HepG2 (cell line): ENCODE measurements at regions of chr7 and their contacts with region 1.

Region 1: DNA sequence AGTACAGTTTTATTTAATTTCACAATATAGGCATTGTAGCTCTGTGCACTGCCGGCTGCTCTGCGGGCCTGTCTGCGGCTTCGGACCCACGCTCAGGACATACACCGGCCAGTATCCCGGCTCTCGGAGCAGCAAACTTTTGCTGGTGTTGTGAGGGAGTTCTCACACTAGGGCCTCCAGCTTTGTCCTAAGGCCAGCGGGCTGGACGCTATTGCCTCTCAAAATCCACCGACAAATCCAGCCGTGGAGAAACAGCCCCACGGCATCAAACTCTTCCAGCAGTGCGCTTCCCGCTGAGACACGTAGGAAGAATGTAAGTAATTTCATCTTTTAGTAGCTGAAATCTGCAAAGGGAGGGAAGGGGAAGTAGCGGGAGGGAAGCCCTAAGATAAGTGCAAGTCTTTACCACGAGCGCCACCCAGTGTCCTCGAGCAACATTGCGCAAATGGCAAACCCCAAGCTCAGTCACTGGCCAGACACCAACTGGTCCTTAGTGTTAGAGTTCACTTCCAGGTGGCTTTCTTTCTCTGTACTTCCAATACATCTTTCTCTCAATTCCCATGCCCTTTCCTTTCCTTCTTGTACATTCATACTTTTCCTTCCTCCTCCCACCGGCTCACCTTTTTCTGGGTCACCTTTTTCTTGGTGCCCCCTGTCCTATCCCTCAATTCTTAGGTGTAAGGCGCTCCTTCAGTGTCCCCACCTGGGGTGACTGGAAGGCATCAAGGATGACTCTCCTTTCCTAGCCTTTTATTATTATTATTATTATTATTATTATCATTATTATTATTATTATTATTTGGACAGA is 3.0 kb upstream of the DLX5 start:
- DNase-seq: peak; percentile 70
- ATAC-seq: peak; percentile 86
- H3K4me3 ChIP-seq: peak overlapping the region; percentile 53 to 77 (median 68)
- H3K27ac ChIP-seq: no peak overlapping the region
- H3K4me1 ChIP-seq: peaks cover 24% of the 10 kb centered on the region
- H3K27me3 ChIP-seq: peaks cover 0 to 42% of the 10 kb centered on the region in 2 experiments; a peak in 4 of 5 replicates
- CTCF ChIP-seq: peak; percentile 96
- EP300 ChIP-seq: no peak
- POLR2A ChIP-seq: no peak
- RAD21 ChIP-seq: peak; percentile 93

Region 2: DNA sequence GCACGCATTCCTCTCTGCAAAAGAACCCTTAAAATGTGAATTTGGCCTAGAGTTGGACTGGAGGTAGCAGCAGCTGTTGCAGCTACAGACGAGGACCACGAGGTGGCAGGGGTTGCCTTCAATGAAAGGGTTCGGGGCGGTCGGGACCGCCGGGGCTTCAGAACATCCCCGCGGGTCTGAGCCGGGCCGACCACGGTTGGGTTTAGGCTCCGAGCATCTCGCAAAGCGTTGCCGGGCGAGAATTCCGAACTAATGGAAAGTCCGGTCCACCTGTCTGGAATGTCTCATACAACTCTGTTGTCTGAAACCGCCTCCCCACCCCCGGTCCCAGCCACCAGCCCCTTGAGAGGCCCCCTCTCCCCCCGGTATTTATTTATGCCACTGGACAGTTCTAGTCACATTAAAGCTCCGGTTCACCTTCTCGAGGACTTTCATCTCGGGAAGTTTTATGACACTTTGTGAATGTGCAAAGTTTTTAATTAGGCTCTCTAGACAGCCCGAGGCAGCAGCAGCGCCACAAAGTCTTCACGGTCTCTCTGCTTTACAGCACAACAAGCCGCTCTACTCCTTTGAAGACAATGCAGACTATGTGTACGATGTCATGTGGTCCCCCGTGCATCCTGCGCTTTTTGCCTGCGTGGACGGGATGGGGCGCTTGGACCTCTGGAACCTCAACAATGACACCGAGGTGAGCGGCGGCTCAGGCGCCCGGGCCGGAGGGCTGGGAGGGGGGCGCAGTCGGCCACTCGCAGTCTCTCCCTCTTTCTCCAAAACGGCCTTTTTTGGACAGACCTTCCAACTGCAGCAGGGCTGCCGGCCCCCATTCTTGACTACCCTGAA is 951.9 kb before region 1 on chr7:
- CTCF ChIA-PET with region 1: interaction called, 13 read pairs
- POLR2A ChIA-PET with region 1: no interaction called
- in situ Hi-C with region 1: loop called (anchors 10 kb)
- intact Hi-C with region 1: loop called (anchors 1 kb)
- DNase-seq: peak; percentile 55
- ATAC-seq: peak; percentile 99
- H3K4me3 ChIP-seq: peak overlapping the region; percentile 53 to 56 (median 56)
- H3K27ac ChIP-seq: no peak overlapping the region
- H3K4me1 ChIP-seq: peaks cover 7% of the 10 kb centered on the region
- H3K27me3 ChIP-seq: peaks cover 3 to 14% of the 10 kb centered on the region in 2 experiments; a peak in 3 of 5 replicates
- CTCF ChIP-seq: peak; percentile 91
- EP300 ChIP-seq: no peak
- POLR2A ChIP-seq: no peak
- RAD21 ChIP-seq: peak; percentile 90

Region 3: GRCh38 chr7:96596120-96596826 is 431.4 kb before region 1 on chr7:
- CTCF ChIA-PET with region 1: no interaction called
- POLR2A ChIA-PET with region 1: no interaction called
- in situ Hi-C with region 1: no loop called
- intact Hi-C with region 1: loop called (anchors 10 kb)
- DNase-seq: no peak
- ATAC-seq: peak; percentile 39; the same call in 1 of the 3 replicates
- H3K4me3 ChIP-seq: no peak overlapping the region
- H3K27ac ChIP-seq: no peak overlapping the region
- H3K4me1 ChIP-seq: peaks cover 9% of the 10 kb centered on the region; the same call in 1 of the 2 replicates
- H3K27me3 ChIP-seq: no peaks in the 10 kb centered on the region
- CTCF ChIP-seq: no peak
- EP300 ChIP-seq: no peak
- POLR2A ChIP-seq: no peak
- RAD21 ChIP-seq: no peak

Region 4: DNA sequence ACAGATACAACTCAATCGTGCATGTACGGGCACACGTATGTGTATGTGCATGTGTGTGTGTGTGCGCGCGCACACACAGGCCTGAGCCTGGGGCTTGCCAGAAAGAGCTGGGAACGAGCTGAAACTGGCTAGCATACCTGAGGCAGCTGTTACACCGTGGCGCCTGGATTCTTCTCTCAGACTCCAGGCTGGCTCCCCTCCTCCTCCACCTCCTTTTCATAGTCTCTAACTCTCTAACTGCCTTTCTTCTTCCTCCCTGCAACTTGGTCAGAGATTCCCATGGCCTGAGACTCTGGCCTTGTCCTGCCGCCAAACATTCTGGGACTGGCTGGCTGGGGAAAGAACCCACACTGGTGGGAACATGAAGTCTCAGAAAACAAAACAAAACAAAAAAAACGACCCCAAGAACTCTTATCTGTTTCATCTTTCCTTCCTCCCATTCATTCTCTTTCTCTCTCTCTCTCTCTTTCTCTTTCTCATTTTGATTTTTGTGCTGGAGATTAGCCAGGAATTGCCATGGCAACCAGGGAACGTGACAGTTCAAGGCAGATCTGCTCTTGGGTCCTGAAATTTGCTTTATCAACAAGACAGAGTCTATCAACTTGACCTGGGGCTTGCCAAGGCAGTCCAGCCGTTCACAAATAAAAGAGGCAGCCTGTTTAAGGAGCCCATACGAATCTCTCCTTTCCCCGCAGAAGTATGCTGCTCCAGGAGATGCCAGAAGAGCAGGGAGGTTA is 241.2 kb before region 1 on chr7:
- CTCF ChIA-PET with region 1: no interaction called
- POLR2A ChIA-PET with region 1: no interaction called
- in situ Hi-C with region 1: loop called (anchors 10 kb)
- intact Hi-C with region 1: no loop called
- DNase-seq: no peak
- ATAC-seq: no peak
- H3K4me3 ChIP-seq: no peak overlapping the region
- H3K27ac ChIP-seq: no peak overlapping the region
- H3K4me1 ChIP-seq: 0 out of 2 replicates have a peak, but pooled peaks cover 9% of the 10 kb centered on the region
- H3K27me3 ChIP-seq: no peaks in the 10 kb centered on the region; a peak in 1 of 5 replicates
- CTCF ChIP-seq: no peak
- EP300 ChIP-seq: no peak
- POLR2A ChIP-seq: no peak
- RAD21 ChIP-seq: no peak

Region 5: DNA sequence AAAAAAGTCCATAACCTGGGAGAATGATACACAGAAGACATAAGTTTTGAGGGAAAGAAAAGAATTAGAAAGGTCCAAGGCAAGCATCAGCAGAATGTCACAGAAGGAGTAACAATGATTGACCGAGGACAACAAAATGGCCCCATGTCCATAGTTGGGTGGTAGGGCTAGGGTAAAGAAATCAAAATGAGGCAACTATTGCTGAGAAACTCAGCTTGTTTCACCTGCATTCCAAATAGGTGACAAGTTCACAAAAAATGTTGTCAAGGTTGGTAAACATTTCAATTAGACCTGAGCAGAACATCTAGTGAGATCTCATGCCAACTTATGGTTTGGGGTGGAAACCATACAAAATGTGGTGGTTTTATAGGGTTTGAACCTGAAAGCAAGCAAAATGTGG is 45.0 kb before region 1 on chr7:
- CTCF ChIA-PET with region 1: no interaction called
- POLR2A ChIA-PET with region 1: no interaction called
- in situ Hi-C with region 1: no loop called
- intact Hi-C with region 1: no loop called
- DNase-seq: peak; percentile 15
- ATAC-seq: no peak
- H3K4me3 ChIP-seq: no peak overlapping the region
- H3K27ac ChIP-seq: no peak overlapping the region
- H3K4me1 ChIP-seq: peaks cover 31% of the 10 kb centered on the region
- H3K27me3 ChIP-seq: no peaks in the 10 kb centered on the region
- CTCF ChIP-seq: no peak
- EP300 ChIP-seq: no peak
- POLR2A ChIP-seq: no peak
- RAD21 ChIP-seq: no peak